RWPE1 (cell line): ENCODE measurements at regions of chr17 and their contacts with region 1.

Region 1: DNA sequence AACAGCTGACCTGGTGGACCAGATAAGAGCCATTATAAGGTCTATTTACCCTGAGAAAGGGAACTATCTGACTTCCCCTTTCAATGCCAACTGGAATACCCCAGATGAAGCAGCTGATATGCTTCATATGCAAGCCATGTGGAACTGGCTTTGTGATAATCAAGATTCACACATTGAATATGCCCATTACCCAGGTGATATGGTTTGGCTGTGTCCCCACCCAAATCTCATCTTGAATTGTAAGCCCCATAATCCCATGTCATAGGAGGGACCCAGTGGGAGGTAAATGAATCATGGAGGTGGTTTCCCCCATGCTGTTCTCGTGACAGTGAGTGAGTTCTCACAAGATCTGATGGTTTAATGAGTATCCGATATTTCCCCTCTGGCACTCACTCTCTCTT is 42.1 kb downstream of the IKZF3 start:
- DNase-seq: no peak
- H3K27ac ChIP-seq: no peak overlapping the region
- CTCF ChIP-seq: no peak

Region 2: DNA sequence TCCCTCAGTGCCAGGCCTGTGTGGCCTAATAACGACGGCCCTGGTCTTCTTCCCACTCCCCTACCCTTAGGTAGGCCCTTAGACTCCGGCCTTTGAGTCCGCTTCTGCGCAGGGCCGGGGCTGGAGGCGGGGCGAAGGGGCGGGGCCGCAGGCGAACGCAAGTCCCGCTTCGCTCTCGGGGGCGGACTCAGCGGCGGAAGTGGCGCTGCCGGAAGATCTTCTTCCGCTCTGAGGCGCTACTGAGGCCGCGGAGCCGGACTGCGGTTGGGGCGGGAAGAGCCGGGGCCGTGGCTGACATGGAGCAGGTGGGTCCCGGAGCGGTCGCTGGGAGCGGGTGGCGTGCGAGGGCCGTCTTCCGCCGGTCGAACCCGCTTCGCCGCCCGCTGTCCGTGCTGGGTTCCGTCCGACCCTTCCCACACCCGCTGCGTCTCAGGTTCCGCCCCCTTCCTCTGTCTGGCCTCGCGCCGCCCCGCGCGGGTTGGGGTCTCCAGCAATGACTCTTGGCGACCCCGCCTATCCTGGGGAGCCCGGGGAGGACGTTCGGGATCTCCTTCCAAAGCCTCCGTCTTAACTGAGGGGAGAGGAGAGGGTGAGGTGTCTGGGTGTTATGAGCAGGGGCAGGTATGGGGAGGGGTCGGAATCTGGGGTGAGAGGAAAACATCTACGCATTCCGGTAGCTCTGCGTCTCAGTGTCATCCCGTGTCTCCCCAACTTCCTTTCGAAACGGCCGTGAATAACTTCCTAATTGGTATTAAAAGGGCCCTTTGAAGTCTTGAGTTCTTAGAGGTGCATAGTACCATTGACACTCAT is 184.9 kb before region 1 on chr17 and contains the start of gene STARD3:
- CTCF ChIA-PET with region 1: no interaction called
- POLR2A ChIA-PET with region 1: no interaction called
- DNase-seq: peak; percentile 84
- H3K27ac ChIP-seq: peak within 1 kb of the TSS; percentile 80
- CTCF ChIP-seq: no peak

Region 3: DNA sequence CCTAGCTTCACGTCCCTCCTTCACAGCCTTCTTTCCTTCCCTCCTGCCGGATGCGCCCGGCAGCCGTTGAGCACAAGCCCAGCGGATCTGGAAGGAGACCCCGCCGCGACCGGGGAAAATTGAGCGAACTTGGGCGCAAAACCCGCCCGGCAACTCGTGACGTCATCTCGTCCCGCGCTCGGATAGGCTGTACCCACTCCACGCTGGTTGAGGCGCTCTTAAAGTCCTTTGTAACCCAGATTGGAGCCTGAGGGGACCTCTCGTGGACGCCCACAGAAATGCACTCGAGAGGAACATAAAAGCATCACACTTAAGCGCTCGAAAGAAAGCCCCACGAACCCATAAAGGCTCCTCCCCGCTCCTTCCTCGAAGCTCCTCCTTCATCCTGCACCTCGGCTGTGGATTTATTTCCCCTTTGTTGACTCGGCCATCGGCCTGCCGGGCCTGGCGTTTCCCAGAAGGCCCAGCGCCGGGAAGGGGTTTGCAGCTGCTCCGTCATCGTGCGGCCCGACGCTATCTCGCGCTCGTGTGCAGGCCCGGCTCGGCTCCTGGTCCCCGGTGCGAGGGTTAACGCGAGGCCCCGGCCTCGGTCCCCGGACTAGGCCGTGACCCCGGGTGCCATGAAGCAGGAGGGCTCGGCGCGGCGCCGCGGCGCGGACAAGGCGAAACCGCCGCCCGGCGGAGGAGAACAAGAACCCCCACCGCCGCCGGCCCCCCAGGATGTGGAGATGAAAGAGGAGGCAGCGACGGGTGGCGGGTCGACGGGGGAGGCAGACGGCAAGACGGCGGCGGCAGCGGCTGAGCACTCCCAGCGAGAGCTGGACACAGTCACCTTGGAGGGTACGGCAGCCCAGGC is 158.5 kb after region 1 on chr17 and contains the start of gene PSMD3:
- CTCF ChIA-PET with region 1: no interaction called
- POLR2A ChIA-PET with region 1: interaction called, 10 read pairs
- DNase-seq: peak; percentile 95
- H3K27ac ChIP-seq: peak within 1 kb of the TSS; percentile 88
- CTCF ChIP-seq: peak; percentile 79